Posterior cingulate gyrus (tissue), 11 donors: ENCODE measurements at regions of chr9 and their contacts with region 1.

Region 1: GRCh38 chr9:129783516-129784361 is 19.2 kb upstream of the TOR1B start:
- DNase-seq: peak; percentile 33 to 93 (median 70)

Region 2: DNA sequence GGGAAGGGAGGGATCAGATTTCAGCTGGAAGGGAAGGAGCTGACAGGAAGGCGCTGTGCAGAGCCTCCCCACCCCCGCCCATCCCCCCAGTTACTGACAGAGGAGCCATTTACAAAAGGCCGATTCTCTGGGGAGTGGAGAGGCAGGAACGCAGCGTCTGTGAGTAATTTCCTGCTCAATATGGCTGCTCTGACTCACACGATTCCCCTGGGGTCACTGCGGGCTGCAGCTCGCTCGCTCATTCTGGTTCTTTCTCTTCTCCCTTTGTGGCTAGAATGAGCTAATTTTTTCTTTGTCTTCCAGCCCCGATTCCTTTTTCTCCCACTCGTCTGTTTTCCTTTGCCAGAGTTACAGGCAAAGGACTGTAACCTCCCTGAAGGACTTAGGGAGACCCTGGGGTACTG is 643.7 kb before region 1 on chr9:
- intact Hi-C with region 1: loop called (anchors 5 kb)
- DNase-seq: peak; percentile 66 to 96 (median 79)

Region 3: GRCh38 chr9:129641746-129642513 is 141.8 kb before region 1 on chr9 and contains the start of gene ASB6:
- intact Hi-C with region 1: loop called (anchors 5 kb)
- DNase-seq: peak; percentile 90 to 99 (median 95)

Region 4: GRCh38 chr9:129737479-129738274 is 46.1 kb before region 1 on chr9:
- intact Hi-C with region 1: loop called (anchors 1 kb)
- DNase-seq: peak; percentile 67 to 96 (median 82)